Activated CD4-positive, alpha-beta memory T cell treated with anti-CD3 and anti-CD28 coated beads for 36 hours (primary cell): ENCODE measurements at regions of chr4 and their contacts with region 1.

Region 1: DNA sequence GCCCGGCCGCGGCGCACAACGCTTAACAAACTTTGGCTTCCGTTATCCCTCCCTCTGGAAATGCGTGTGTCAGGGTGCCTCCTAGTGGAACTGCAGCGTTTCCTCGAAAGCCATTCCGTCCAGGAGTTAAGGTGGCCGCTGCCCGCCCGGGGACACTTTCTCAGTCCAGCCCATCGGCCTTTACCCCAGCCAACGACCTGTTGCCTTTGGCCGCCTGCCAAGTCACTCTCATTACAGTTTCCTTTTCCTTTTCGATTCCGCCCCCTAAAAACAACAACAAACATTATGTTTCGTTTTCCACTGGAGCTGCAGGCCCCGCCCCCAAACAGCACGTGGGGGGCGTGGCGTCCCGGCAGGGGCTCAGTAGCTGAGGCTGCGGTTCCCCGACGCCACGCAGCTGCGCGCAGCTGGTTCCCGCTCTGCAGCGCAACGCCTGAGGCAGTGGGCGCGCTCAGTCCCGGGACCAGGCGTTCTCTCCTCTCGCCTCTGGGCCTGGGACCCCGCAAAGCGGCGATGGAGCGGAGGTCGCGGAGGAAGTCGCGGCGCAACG is at the start of gene HERC5:
- DNase-seq: peak; percentile 94
- H3K4me3 Mint-ChIP-seq: peak within 1 kb of the TSS; percentile 100
- H3K27ac Mint-ChIP-seq: peak within 1 kb of the TSS; percentile 97
- H3K4me1 Mint-ChIP-seq: peaks cover 12% of the 10 kb centered on the region
- H3K27me3 Mint-ChIP-seq: peaks cover 3% of the 10 kb centered on the region
- total RNA-seq, gene HERC5: 32.3 to 34.0 TPM

Region 2: DNA sequence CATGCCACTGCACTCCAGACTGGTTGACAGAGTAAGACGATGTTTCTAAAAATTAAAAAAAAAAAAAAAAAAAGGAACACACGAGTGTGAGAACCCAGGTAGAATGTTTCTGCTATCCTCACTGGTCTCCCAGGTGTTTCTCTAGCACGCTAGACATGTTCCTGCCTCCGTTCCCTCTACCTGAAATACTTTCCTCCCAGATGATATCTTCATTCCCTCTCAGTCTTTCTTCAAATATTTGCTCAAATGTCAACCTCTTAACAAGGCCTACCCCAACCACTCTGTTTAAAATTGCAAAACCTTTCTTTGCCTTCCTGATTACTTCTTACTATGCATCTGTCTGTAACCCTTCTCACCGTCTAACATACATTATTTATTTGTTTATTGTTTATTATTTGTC is 238.9 kb before region 1 on chr4:
- CTCF ChIA-PET with region 1: interaction called, 6 read pairs
- POLR2A ChIA-PET with region 1: no interaction called
- intact Hi-C with region 1: loop called (anchors 2 kb)
- DNase-seq: no peak
- H3K4me3 Mint-ChIP-seq: no peak overlapping the region
- H3K27ac Mint-ChIP-seq: no peak overlapping the region
- H3K4me1 Mint-ChIP-seq: peaks cover 2% of the 10 kb centered on the region
- H3K27me3 Mint-ChIP-seq: peaks cover 3% of the 10 kb centered on the region

Region 3: DNA sequence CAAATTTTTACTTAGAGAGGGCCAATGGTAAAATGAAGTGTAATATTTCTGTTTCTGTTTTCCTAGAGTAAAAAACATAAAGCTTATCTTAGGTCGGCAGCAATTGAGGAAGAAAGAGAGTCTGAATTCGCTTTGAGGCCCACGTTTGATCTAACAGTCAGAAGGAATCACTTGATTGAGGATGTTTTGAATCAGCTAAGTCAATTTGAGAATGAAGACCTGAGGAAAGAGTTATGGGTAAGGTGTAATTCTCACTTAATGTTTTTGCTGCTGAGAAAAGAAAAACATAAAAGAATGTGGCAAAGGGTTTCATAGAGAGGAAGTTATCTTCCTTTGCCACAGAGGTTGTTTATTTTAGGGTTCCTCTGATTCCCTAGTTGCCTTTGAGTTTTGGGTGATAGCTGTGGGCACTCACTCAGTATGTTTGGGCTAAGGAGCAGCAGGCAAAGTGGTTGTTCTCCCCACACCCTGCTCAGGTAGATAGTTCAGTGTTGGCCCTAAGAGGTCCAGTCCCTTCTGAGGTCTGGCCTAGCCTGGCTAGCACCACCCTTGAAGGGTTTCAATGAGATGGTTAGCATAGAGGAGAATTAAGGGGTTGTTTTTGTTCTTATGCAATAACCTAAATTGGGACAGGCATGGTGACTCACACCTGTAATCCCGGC is 32.4 kb after region 1 on chr4:
- CTCF ChIA-PET with region 1: no interaction called
- POLR2A ChIA-PET with region 1: no interaction called
- intact Hi-C with region 1: loop called (anchors 1 kb)
- DNase-seq: no peak
- H3K4me3 Mint-ChIP-seq: no peak overlapping the region
- H3K27ac Mint-ChIP-seq: peak overlapping the region; percentile 79
- H3K4me1 Mint-ChIP-seq: peaks cover 13% of the 10 kb centered on the region
- H3K27me3 Mint-ChIP-seq: no peaks in the 10 kb centered on the region